ENCODE measurements at regions of chr2 and their contacts with region 1.

Region 1: GRCh38 chr2:112275306-112275886 is at the start of gene ZC3H6:
- DNase-seq: peak; percentile 100
- ATAC-seq: peak; percentile 96
- H3K4me3 Mint-ChIP-seq: peak within 1 kb of the TSS; percentile 92
- H3K27ac Mint-ChIP-seq: peak within 1 kb of the TSS; percentile 98
- H3K4me1 Mint-ChIP-seq: peaks cover 10% of the 10 kb centered on the region
- H3K27me3 Mint-ChIP-seq: no peaks in the 10 kb centered on the region
- total RNA-seq, gene ZC3H6: 21.3 to 22.5 TPM

Region 2: GRCh38 chr2:112108178-112108832 is 167.1 kb before region 1 on chr2:
- POLR2A ChIA-PET with region 1: no interaction called
- DNase-seq: no peak
- ATAC-seq: no peak
- H3K4me3 Mint-ChIP-seq: no peak overlapping the region
- H3K27ac Mint-ChIP-seq: no peak overlapping the region
- H3K4me1 Mint-ChIP-seq: peaks cover 2% of the 10 kb centered on the region
- H3K27me3 Mint-ChIP-seq: no peaks in the 10 kb centered on the region

Region 3: GRCh38 chr2:112216166-112216565 is 59.2 kb before region 1 on chr2:
- POLR2A ChIA-PET with region 1: no interaction called
- DNase-seq: no peak
- ATAC-seq: no peak
- H3K4me3 Mint-ChIP-seq: no peak overlapping the region
- H3K27ac Mint-ChIP-seq: no peak overlapping the region
- H3K4me1 Mint-ChIP-seq: peaks cover 3% of the 10 kb centered on the region
- H3K27me3 Mint-ChIP-seq: no peaks in the 10 kb centered on the region

Region 4: DNA sequence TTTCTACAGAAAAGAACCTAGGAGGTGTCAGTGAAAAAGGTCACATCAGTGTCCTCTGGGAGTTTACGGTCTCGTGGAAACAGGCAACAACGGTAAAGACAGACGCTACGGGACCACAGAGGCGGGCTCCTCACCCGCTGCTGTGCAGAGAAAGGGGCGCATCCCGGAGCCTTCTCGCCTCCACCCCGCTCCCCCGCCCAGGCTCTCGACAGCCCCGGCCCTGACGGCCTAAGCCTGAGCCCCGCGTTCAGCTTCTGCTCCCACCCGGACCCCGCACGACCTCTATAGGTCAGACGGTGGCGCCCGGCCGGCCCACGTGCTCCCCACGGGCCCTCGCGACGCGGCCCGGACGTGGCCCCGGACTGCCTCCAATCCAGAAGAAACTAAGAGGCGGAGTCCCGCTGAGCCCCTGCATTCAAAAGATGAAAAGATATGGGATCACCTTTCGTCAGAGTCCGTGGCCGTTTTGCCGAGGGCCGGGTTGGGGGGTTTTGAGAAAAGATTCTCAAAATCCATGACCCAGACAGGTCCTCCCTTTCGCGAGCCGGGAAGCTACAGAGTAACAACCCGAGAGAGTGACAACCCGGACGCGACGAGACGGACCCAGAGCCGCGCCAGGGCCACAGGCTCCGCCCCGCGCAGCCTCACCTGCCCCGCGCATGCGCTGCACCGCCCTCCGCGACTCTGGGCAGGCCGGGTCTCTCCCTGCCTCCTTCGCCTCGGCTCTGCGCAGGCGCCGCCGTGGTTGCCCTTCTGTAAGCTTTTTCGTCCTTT is 20.7 kb before region 1 on chr2 and contains the start of gene ZC3H8:
- POLR2A ChIA-PET with region 1: interaction called, 13 read pairs
- DNase-seq: peak; percentile 99
- ATAC-seq: peak; percentile 96
- H3K4me3 Mint-ChIP-seq: peak within 1 kb of the TSS; percentile 82
- H3K27ac Mint-ChIP-seq: peak within 1 kb of the TSS; percentile 91
- H3K4me1 Mint-ChIP-seq: peaks cover 19% of the 10 kb centered on the region
- H3K27me3 Mint-ChIP-seq: no peaks in the 10 kb centered on the region
- total RNA-seq, gene ZC3H8: 15.7 to 17.1 TPM